B cell (primary cell): ENCODE measurements at regions of chr1 and their contacts with region 1.

Region 1: DNA sequence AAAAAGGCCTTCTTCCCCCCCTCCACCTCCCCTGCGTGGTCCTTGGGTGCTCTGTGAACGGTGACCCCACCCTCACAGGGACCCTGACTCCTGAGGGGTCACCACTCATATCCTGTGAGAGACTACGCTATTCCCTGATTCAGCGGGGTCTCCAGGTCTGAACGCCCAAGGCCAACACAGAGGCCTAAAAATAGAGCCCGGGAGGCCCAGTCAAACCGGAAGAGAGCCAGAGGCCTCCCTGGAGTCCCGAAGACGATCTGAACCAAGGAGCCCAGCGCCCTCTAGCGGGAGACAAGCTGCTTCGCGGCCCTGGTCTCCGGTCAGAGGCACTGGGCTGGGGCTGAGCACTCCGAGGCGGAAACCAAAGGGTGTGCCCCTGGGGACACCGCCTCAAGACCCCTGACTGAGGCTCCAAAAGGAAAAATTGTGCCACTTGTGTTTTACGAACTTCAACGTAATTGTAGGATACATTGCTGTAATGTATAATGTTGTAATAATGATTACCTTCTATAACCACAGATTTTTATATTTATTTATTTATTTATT is 42.4 kb upstream of the PSEN2 start:
- DNase-seq: peak; percentile 91
- ATAC-seq: peak; percentile 96
- H3K4me3 ChIP-seq: peak overlapping the region in 4 of 5 experiments; percentile 21 to 53 (median 34)
- H3K4me3 Mint-ChIP-seq: peak overlapping the region; percentile 67
- H3K27ac ChIP-seq: peak overlapping the region; percentile 48 to 56
- H3K27ac Mint-ChIP-seq: peak overlapping the region; percentile 26
- H3K4me1 ChIP-seq: peaks cover 11 to 35% of the 10 kb centered on the region in 2 donors
- H3K4me1 Mint-ChIP-seq: peaks cover 36% of the 10 kb centered on the region
- H3K27me3 ChIP-seq: no peaks in the 10 kb centered on the region
- H3K27me3 Mint-ChIP-seq: no peaks in the 10 kb centered on the region
- CTCF ChIP-seq: peak; percentile 97

Region 2: GRCh38 chr1:226424228-226425003 is 403.6 kb before region 1 on chr1:
- CTCF ChIA-PET with region 1: interaction called, 3 read pairs
- POLR2A ChIA-PET with region 1: no interaction called
- intact Hi-C with region 1: loop called (anchors 10 kb)
- DNase-seq: peak; percentile 57
- ATAC-seq: peak; percentile 64
- H3K4me3 ChIP-seq: no peak overlapping the region
- H3K4me3 Mint-ChIP-seq: no peak overlapping the region
- H3K27ac ChIP-seq: no peak overlapping the region
- H3K27ac Mint-ChIP-seq: no peak overlapping the region
- H3K4me1 ChIP-seq: peaks cover 7 to 15% of the 10 kb centered on the region in 2 donors
- H3K4me1 Mint-ChIP-seq: peaks cover 20% of the 10 kb centered on the region
- H3K27me3 ChIP-seq: no peaks in the 10 kb centered on the region
- H3K27me3 Mint-ChIP-seq: no peaks in the 10 kb centered on the region
- CTCF ChIP-seq: peak; percentile 60

Region 3: GRCh38 chr1:226626577-226626956 is 201.5 kb before region 1 on chr1:
- CTCF ChIA-PET with region 1: interaction called, 278 read pairs
- POLR2A ChIA-PET with region 1: interaction called, 5 read pairs
- intact Hi-C with region 1: loop called (anchors 1 kb)
- DNase-seq: peak; percentile 85
- ATAC-seq: peak; percentile 97
- H3K4me3 ChIP-seq: peak overlapping the region in 4 of 5 experiments; percentile 9 to 46 (median 32)
- H3K4me3 Mint-ChIP-seq: peak overlapping the region; percentile 56
- H3K27ac ChIP-seq: no peak overlapping the region
- H3K27ac Mint-ChIP-seq: peak overlapping the region; percentile 21
- H3K4me1 ChIP-seq: peaks cover 20 to 21% of the 10 kb centered on the region in 2 donors
- H3K4me1 Mint-ChIP-seq: peaks cover 37% of the 10 kb centered on the region
- H3K27me3 ChIP-seq: no peaks in the 10 kb centered on the region
- H3K27me3 Mint-ChIP-seq: no peaks in the 10 kb centered on the region
- CTCF ChIP-seq: peak; percentile 95

Region 4: GRCh38 chr1:226642876-226643576 is 185.0 kb before region 1 on chr1:
- CTCF ChIA-PET with region 1: interaction called, 278 read pairs
- POLR2A ChIA-PET with region 1: no interaction called
- intact Hi-C with region 1: no loop called
- DNase-seq: peak; percentile 62
- ATAC-seq: peak; percentile 48
- H3K4me3 ChIP-seq: no peak overlapping the region
- H3K4me3 Mint-ChIP-seq: peak overlapping the region; percentile 81
- H3K27ac ChIP-seq: peak overlapping the region; percentile 62 to 68
- H3K27ac Mint-ChIP-seq: peak overlapping the region; percentile 91
- H3K4me1 ChIP-seq: peaks cover 57 to 70% of the 10 kb centered on the region in 2 donors
- H3K4me1 Mint-ChIP-seq: peaks cover 71% of the 10 kb centered on the region
- H3K27me3 ChIP-seq: no peaks in the 10 kb centered on the region
- H3K27me3 Mint-ChIP-seq: no peaks in the 10 kb centered on the region
- CTCF ChIP-seq: no peak

Region 5: GRCh38 chr1:226687426-226687825 is 140.6 kb before region 1 on chr1:
- CTCF ChIA-PET with region 1: interaction called, 37 read pairs
- POLR2A ChIA-PET with region 1: no interaction called
- intact Hi-C with region 1: no loop called
- DNase-seq: peak; percentile 73
- ATAC-seq: peak; percentile 44
- H3K4me3 ChIP-seq: no peak overlapping the region
- H3K4me3 Mint-ChIP-seq: peak overlapping the region; percentile 74
- H3K27ac ChIP-seq: no peak overlapping the region
- H3K27ac Mint-ChIP-seq: peak overlapping the region; percentile 91
- H3K4me1 ChIP-seq: peaks cover 78 to 93% of the 10 kb centered on the region in 2 donors
- H3K4me1 Mint-ChIP-seq: peaks cover 97% of the 10 kb centered on the region
- H3K27me3 ChIP-seq: no peaks in the 10 kb centered on the region
- H3K27me3 Mint-ChIP-seq: no peaks in the 10 kb centered on the region
- CTCF ChIP-seq: peak; percentile 52

Region 6: DNA sequence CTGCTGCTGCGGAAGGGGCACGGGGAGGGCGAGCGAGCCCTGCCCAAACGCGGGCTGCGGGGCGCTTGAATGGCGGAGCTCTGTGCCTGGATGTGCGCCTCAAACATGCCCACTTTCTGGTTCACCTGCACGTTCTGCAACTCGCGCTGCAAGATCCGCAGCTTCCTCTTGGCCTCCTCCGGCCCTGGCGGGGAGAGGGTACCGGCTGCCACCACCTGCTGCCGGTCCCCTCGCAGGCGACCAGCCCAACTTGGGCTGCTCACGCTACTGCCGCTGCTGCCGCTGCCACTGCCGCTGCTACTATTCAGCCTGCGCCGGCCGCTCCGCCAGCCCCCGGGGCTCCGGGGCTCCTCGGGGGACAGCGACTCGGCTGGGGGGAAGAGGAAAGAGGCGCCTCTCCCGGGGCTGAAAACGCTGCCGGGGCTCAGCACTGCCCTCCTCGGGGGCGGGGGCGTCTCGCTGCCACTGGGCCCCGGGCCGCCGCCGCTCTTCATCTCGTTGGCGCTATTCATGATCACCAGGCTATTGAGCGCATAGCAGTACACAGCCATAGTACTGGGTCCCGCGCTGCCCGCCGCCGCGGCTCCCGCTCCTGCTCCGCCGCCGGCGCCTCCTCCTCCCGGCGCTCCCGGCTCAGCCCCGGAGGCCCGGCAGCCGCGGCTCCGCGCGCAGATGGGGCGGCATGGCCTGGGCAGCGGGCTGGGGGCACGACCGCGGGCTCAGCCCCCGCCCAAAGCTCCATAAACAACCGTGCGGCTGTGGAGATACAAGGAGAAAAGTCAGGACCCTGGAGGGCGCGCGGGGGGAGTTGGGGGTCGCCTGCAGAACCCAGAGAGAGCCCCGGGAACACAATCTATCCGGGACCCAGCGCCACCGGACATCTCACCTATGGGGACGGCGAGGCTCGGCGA is 90.9 kb before region 1 on chr1:
- CTCF ChIA-PET with region 1: interaction called, 5 read pairs
- POLR2A ChIA-PET with region 1: no interaction called
- intact Hi-C with region 1: loop called (anchors 2 kb)
- DNase-seq: peak; percentile 81
- ATAC-seq: peak; percentile 46
- H3K4me3 ChIP-seq: peak overlapping the region; percentile 82 to 97 (median 87)
- H3K4me3 Mint-ChIP-seq: peak overlapping the region; percentile 90
- H3K27ac ChIP-seq: peak overlapping the region in 1 of 2 donors; percentile 78
- H3K27ac Mint-ChIP-seq: no peak overlapping the region
- H3K4me1 ChIP-seq: peaks cover 67 to 70% of the 10 kb centered on the region in 2 donors
- H3K4me1 Mint-ChIP-seq: peaks cover 66% of the 10 kb centered on the region
- H3K27me3 ChIP-seq: no peaks in the 10 kb centered on the region
- H3K27me3 Mint-ChIP-seq: no peaks in the 10 kb centered on the region
- CTCF ChIP-seq: peak; percentile 33